Sciatic nerve (tissue), 2 donors: ENCODE measurements at regions of chr11 and their contacts with region 1.

Region 1: GRCh38 chr11:75802913-75803820 is 11.8 kb upstream of the UVRAG start:
- DNase-seq: peak; percentile 88
- ATAC-seq: peak; percentile 87

Region 2: GRCh38 chr11:75867775-75868374 is 64.7 kb after region 1 on chr11:
- intact Hi-C with region 1: loop called (anchors 10 kb)
- DNase-seq: no peak
- ATAC-seq: peak; percentile 80